HAP-1 (cell line): ENCODE measurements at regions of chr5 and their contacts with region 1.

Region 1: DNA sequence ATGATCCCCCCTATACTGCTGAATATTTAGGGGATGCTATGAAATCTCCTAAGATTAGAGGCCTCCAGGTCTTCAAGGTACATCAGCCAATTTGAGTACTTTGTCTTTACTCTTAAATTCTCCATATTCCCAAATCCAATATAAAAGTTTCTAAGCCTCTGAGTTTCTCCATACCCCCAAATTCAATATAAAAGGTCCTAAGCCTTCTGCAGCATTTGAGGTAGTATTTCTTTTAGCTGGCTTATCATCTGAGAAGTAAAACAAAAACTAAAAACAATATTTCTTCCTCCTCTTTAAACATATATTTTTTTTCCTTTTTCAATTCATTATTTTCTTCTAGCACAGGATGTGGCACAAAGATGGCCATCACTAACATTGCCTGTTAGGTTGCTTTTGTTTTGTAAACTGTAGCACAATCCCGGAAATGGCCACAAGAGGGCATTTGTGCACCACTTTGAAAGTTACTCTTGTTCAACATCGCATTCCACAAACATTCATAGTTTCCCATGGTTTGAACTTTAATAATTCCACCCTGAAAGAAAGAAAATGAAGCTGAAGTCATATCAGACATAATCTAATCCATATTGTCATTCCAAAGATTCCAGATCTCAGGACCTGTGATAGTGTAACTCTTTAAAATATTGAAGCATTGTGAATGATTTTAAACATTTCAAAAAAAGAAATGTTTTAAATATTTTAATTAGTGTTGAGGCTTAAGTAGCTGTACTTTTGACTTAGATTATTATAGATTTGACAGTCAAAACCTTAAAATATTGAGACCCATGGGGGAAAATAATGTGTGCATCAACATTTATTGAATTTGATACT is 21.0 kb upstream of the SCGB3A2 start:
- DNase-seq: peak; percentile 32 to 78
- H3K4me3 ChIP-seq: no peak overlapping the region
- H3K4me1 ChIP-seq: no peaks in the 10 kb centered on the region
- H3K27me3 ChIP-seq: peaks cover 4% of the 10 kb centered on the region

Region 2: DNA sequence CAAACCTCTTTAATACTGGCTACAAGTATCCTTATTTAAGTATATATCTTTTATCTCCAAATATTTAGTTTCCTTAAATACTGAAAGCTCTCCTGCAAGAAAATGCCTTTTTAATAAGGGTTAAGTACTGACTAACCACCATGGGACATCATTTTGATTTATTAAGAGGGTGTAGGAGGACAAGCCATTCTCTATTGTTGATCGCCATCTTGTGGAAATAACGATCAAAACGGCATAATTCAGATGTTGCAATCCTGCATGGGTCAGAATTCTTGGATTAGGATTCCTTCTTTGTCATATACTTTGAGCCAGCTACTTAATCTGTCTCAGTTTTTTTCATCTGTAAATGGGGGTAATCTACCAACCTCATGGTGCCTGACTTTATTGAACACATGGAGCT is 77.5 kb after region 1 on chr5:
- in situ Hi-C with region 1: loop called (anchors 10 kb)
- DNase-seq: peak; percentile 24 to 56
- H3K4me3 ChIP-seq: no peak overlapping the region
- H3K4me1 ChIP-seq: no peaks in the 10 kb centered on the region
- H3K27me3 ChIP-seq: 0 out of 2 replicates have a peak, but pooled peaks cover 3% of the 10 kb centered on the region

Region 3: DNA sequence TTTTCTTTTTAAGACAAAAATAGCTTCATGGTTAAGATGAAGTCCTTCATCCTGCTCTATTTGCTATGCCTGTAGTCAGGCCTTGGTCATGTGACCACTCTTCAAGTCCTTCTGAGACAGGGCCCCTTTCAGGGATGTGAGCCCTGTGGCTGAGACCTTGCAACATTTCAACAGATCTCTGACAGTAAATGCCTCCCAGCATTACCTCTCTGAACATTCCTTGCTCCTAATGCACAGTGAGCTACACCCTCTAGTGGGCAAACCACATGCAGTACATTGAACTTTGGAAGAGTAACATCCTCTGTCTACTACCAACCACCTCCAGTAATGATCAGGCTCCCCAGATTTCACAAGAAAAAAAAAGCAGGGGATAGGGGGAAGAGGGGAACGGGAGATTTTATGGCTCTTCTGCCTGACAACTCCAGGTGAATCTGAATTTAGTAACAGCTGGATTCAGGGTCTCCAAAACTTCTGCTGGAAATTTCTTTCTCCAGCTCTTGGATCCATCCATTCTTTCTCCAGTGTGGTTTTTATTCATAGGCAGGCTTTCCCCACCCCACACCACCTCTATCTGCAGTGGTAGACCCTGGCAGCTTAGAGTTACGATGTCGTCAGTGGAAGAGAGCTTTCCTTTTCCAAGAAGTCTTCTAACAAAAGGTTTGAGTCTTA is 517.3 kb after region 1 on chr5:
- in situ Hi-C with region 1: no loop called
- DNase-seq: peak; percentile 49 to 63
- H3K4me3 ChIP-seq: no peak overlapping the region
- H3K4me1 ChIP-seq: peaks cover 8% of the 10 kb centered on the region; the same call in 1 of the 2 replicates
- H3K27me3 ChIP-seq: no peaks in the 10 kb centered on the region